Breast epithelium (tissue), 4 donors: ENCODE measurements at regions of chr13 and their contacts with region 1.

Region 1: DNA sequence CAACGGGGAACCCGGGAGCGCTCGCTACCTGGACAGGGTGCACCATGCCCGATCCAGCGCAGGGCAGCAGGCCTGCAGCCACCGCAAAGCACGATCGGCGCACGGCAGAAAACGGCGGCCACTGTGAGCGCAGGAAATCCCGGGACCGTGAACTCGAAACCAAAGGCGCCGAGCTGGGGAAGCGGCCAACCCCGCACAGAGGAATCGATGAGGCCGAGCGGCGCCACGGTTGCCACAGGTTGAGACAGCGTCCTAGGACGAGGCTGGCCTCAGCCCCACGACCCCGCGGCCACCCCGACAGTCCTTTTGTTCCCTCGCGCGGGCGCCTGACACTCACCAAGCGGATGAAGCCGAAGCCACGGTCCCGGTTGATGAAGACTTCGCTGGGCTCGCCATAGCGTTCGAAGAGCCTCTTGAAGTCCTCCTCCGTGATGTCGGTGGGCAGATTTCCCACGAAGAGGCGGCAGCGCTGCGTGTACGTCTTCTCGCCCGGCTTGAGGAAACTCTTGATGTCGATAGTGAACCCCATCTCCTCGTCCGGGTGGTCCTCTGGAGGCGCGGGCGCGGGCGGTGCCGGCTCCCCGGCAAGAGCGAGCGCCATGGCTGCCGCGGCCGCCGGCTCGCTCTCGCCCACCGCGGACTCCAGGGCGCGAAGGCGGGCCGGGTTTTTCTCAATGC is 557 bp downstream of the PSPC1 start:
- DNase-seq: peak; percentile 24 to 67
- H3K4me3 ChIP-seq: peak overlapping the region; percentile 93 to 98 (median 95)
- H3K27ac ChIP-seq: peak overlapping the region; percentile 96 to 98
- H3K4me1 ChIP-seq: no peaks in the 10 kb centered on the region
- H3K27me3 ChIP-seq: no peaks in the 10 kb centered on the region
- CTCF ChIP-seq: no peak
- POLR2A ChIP-seq: no peak

Region 2: GRCh38 chr13:19117913-19118739 is 664.1 kb before region 1 on chr13:
- intact Hi-C with region 1: no loop called
- DNase-seq: no peak
- H3K4me3 ChIP-seq: no peak overlapping the region
- H3K27ac ChIP-seq: no peak overlapping the region
- H3K4me1 ChIP-seq: no peaks in the 10 kb centered on the region
- H3K27me3 ChIP-seq: no peaks in the 10 kb centered on the region
- CTCF ChIP-seq: no peak
- POLR2A ChIP-seq: no peak

Region 3: DNA sequence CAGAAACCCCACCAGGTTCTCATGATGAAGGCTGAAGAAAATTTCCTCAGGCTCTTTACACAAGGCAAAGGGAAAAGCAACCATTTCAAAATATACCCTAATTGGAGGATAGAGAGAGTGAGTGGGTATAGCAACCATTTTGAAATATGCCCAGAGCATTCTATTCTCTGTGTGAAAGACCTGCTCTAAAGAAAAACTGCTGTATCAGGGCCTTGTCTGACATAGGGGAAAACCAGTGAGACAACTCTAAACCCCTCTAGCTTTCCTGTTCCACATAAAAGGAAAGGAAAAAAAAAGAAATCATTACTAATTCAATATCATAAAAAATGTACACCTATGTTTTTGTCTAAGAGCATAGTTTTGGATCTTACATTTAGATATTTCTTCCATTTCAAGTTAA is 263.1 kb before region 1 on chr13:
- intact Hi-C with region 1: loop called (anchors 10 kb)
- DNase-seq: no peak
- H3K4me3 ChIP-seq: no peak overlapping the region
- H3K27ac ChIP-seq: no peak overlapping the region
- H3K4me1 ChIP-seq: no peaks in the 10 kb centered on the region
- H3K27me3 ChIP-seq: no peaks in the 10 kb centered on the region
- CTCF ChIP-seq: no peak
- POLR2A ChIP-seq: no peak